ENCODE measurements at regions of chr3 and their contacts with region 1.

Region 1: GRCh38 chr3:71504250-71505036 is 79.1 kb downstream of the FOXP1 start:
- DNase-seq: peak; percentile 88
- H3K4me3 Mint-ChIP-seq: peak overlapping the region; percentile 72
- H3K27ac Mint-ChIP-seq: peak overlapping the region; percentile 95
- H3K4me1 Mint-ChIP-seq: peaks cover 36% of the 10 kb centered on the region
- H3K27me3 Mint-ChIP-seq: no peaks in the 10 kb centered on the region
- CTCF ChIP-seq: no peak

Region 2: DNA sequence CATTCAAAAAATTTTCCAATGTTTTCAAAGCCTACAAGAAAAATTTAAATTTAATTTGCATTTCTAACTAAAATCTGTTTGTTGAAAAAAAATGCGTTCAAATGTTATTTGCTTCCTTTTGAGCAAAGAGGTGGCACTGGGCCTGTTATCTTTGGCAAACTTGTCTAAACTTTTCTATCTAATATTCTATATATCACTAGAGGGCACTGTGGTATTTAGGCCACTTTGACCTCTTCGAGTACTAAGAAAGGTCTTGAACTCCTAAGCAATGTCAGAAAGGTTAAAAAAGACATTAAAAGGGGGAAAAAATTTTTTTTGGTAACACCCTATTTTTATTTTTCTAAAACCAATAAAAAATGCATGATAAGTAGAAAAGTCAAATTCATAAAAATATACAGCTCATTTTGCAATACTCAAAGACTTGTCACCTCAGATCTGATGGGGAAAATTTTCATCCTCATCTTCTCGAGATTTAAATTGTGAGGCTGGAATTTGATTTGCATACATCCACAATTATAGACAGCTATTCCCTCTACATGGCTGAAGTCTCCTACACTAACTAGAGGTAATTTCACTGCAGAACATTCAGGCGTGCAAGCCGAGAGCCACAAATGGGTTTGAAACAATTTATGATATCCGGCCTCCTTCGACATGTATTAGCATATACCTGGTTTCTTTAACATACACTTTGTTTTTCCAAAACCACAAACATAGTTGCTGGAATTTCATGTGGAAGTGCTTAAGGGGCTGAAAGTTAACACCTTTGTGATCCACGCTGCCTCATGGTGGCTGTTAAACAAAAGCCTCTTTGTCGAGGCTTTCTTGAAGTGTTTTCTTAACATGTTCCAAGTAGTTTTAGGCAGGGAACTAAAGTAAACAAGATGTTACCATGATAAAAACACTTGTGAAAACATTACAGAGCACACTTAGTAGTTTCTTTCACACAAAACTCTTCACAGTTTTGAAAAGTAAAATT is 497.3 kb before region 1 on chr3:
- CTCF ChIA-PET with region 1: no interaction called
- POLR2A ChIA-PET with region 1: no interaction called
- intact Hi-C with region 1: loop called (anchors 5 kb)
- DNase-seq: peak; percentile 48
- H3K4me3 Mint-ChIP-seq: no peak overlapping the region
- H3K27ac Mint-ChIP-seq: peak overlapping the region; percentile 63
- H3K4me1 Mint-ChIP-seq: peaks cover 15% of the 10 kb centered on the region
- H3K27me3 Mint-ChIP-seq: no peaks in the 10 kb centered on the region
- CTCF ChIP-seq: peak; percentile 61

Region 3: GRCh38 chr3:71421820-71422566 is 82.5 kb before region 1 on chr3:
- CTCF ChIA-PET with region 1: no interaction called
- POLR2A ChIA-PET with region 1: interaction called, 10 read pairs
- intact Hi-C with region 1: loop called (anchors 5 kb)
- DNase-seq: no peak
- H3K4me3 Mint-ChIP-seq: no peak overlapping the region
- H3K27ac Mint-ChIP-seq: peak overlapping the region; percentile 76
- H3K4me1 Mint-ChIP-seq: peaks cover 46% of the 10 kb centered on the region
- H3K27me3 Mint-ChIP-seq: no peaks in the 10 kb centered on the region
- CTCF ChIP-seq: no peak

Region 4: GRCh38 chr3:71537211-71537611 is 32.8 kb after region 1 on chr3:
- CTCF ChIA-PET with region 1: no interaction called
- POLR2A ChIA-PET with region 1: interaction called, 104 read pairs
- intact Hi-C with region 1: loop called (anchors 5 kb)
- DNase-seq: peak; percentile 98
- H3K4me3 Mint-ChIP-seq: peak overlapping the region; percentile 10
- H3K27ac Mint-ChIP-seq: peak overlapping the region; percentile 52
- H3K4me1 Mint-ChIP-seq: peaks cover 59% of the 10 kb centered on the region
- H3K27me3 Mint-ChIP-seq: no peaks in the 10 kb centered on the region
- CTCF ChIP-seq: no peak

Region 5: GRCh38 chr3:71681224-71681668 is 176.8 kb after region 1 on chr3:
- CTCF ChIA-PET with region 1: interaction called, 3 read pairs
- POLR2A ChIA-PET with region 1: no interaction called
- intact Hi-C with region 1: loop called (anchors 10 kb)
- DNase-seq: peak; percentile 80
- H3K4me3 Mint-ChIP-seq: peak overlapping the region; percentile 33
- H3K27ac Mint-ChIP-seq: peak overlapping the region; percentile 83
- H3K4me1 Mint-ChIP-seq: peaks cover 34% of the 10 kb centered on the region
- H3K27me3 Mint-ChIP-seq: no peaks in the 10 kb centered on the region
- CTCF ChIP-seq: peak; percentile 62

Measured in MCF 10A (cell line).